Posterior cingulate gyrus (tissue), 11 donors: ENCODE measurements at regions of chr5 and their contacts with region 1.

Region 1: DNA sequence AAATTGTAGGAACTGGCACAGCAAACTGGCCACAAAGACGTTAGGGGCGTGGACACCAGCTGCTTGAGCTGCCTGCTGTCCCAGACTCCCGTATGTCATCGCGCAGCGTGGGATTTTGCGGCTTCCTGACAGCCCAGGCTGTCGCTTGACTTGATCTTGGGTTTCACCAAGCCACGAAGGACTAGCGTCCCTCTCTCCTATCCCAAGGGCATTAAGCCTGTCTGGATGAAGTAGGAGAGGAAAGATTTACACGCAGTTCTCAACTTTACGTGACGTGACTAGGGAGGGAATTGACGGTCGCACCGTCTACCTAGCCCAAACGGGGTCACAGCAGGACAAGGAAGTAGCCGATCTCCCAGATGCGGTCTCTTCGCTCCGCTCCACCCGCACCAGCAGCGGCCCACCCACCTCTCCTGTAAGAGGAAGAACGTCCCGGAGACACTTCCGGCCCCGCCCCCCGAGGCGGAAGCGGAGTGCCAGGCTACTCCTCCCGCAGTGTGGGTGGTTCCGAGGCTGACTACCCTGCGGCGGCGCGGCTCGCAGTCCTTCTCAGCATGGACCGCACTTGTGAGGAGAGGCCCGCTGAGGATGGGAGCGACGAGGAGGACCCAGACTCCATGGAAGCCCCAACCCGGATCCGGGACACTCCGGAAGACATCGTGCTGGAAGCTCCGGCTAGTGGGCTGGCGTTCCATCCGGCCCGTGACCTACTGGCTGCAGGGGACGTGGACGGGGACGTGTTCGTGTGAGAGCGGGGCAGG is at the start of gene WDR55:
- DNase-seq: peak; percentile 92 to 100 (median 97)

Region 2: GRCh38 chr5:140468188-140468587 is 196.4 kb before region 1 on chr5:
- intact Hi-C with region 1: no loop called
- DNase-seq: no peak

Region 3: DNA sequence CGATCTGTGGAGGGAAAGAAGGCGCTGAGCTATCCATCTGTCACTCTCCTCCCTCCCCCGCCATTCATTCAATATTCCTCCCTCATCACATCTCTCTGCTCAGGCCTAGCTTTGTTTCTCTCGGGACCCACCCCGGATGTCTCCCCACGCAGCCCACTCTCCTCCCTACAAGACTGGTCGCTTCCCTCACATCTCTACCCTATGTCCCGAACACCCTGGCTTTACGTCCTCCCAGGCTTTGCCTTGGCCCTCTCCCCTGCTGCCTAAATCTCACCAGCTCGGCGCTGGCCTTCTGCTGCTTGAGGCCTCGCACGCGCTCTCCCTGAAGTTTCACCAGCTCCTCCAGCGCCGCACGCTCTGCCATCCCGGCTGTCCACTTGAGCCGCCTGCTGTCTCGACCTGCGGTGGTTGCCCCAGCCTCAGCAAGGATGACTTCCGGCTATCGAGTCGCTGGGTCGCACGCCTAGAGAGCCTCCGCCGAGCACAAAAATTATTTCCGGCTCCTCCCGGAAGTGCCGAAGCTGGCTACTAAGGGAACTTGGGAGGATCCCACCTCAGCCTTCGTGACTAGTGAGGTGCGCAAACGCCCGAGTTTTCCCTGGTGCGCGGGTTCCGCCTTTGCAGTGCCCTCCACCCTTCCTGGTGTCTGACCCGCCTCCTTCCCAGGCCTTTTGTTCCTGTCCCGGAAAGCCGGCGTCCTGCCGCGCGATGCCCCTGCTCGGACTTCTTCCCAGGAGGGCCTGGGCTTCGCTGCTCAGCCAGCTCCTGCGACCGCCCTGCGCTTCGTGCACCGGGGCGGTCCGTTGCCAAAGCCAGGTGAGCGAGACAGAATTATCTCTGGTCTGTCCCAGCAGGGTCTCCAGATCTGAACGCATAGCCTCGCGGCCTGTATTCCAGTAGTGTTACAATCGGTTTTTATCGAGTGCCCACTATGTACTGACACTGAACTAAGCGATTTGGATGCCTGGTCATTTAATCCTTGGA is 26.7 kb after region 1 on chr5 and contains the starts of genes HARS1 and HARS2:
- intact Hi-C with region 1: loop called (anchors 2 kb)
- DNase-seq: peak; percentile 88 to 99 (median 92)